Naive thymus-derived CD8-positive, alpha-beta T cell (primary cell): ENCODE measurements at regions of chr7 and their contacts with region 1.

Region 1: GRCh38 chr7:139095194-139095659 is 14.3 kb downstream of the ZC3HAV1 start:
- DNase-seq: peak; percentile 54 to 95 (median 85)
- ATAC-seq: peak; percentile 85 to 94
- H3K4me3 Mint-ChIP-seq: peak overlapping the region; percentile 80 to 98 (median 88)
- H3K27ac Mint-ChIP-seq: peak overlapping the region; percentile 66 to 99 (median 96)
- H3K4me1 Mint-ChIP-seq: peaks cover 47 to 93% (median 87%) of the 10 kb centered on the region in 4 donors
- H3K27me3 Mint-ChIP-seq: no peaks in the 10 kb centered on the region

Region 2: GRCh38 chr7:138797841-138798271 is 297.4 kb before region 1 on chr7 and contains the starts of genes ATP6V0A4 and TMEM213:
- POLR2A ChIA-PET with region 1: no interaction called
- DNase-seq: no peak
- ATAC-seq: peak; percentile 49 to 71
- H3K4me3 Mint-ChIP-seq: peak within 1 kb of the TSS in 2 of 10 donors; percentile 25 to 41
- H3K27ac Mint-ChIP-seq: peak within 1 kb of the TSS in 7 of 10 donors; percentile 9 to 81 (median 44)
- H3K4me1 Mint-ChIP-seq: peaks cover 7 to 13% (median 10%) of the 10 kb centered on the region in 4 donors
- H3K27me3 Mint-ChIP-seq: peaks cover 0 to 3% (median 0%) of the 10 kb centered on the region in 5 donors
- polyA plus RNA-seq, gene ATP6V0A4: not detected
- polyA plus RNA-seq, gene TMEM213: not detected

Region 3: GRCh38 chr7:138954545-138955475 is 140.4 kb before region 1 on chr7:
- POLR2A ChIA-PET with region 1: no interaction called
- DNase-seq: no peak
- ATAC-seq: no peak
- H3K4me3 Mint-ChIP-seq: no peak overlapping the region
- H3K27ac Mint-ChIP-seq: no peak overlapping the region
- H3K4me1 Mint-ChIP-seq: no peaks in the 10 kb centered on the region
- H3K27me3 Mint-ChIP-seq: peaks cover 0 to 11% (median 0%) of the 10 kb centered on the region in 5 donors

Region 4: GRCh38 chr7:139047970-139048369 is 47.3 kb before region 1 on chr7:
- POLR2A ChIA-PET with region 1: no interaction called
- DNase-seq: no peak
- ATAC-seq: no peak
- H3K4me3 Mint-ChIP-seq: no peak overlapping the region
- H3K27ac Mint-ChIP-seq: peak overlapping the region in 7 of 10 donors; percentile 31 to 85 (median 68)
- H3K4me1 Mint-ChIP-seq: peaks cover 19 to 52% (median 50%) of the 10 kb centered on the region in 4 donors
- H3K27me3 Mint-ChIP-seq: no peaks in the 10 kb centered on the region

Region 5: DNA sequence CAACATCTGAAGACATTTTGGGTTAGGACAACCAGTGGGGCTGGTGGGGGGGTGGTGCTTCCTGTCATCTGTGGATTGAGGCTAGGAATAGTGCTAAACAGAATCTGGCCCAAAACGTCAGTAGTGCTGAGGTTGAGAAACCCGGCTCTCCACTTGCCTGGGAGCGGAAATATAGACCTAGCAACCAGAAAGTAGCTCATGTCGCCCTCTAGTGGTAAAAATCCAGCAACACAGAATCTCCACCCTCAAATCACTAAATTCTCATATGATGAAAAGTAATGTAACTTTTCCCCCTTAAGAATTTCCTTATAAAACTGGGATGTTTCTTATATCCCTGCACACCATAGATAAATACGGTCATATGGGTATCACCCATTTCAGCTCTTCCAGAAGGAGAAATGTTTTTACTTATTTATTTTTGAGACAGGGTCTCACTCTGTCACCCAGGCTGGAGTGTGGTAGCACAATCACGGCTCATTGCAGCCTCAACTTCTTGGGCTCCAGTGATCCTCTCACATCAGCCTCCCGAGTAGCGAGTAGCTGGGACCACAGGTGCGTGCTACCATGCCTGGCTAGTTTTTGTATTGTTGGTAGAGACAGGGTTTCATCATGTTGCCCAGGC is 20.1 kb before region 1 on chr7:
- POLR2A ChIA-PET with region 1: interaction called, 121 read pairs
- DNase-seq: peak; percentile 27 to 85 (median 71)
- ATAC-seq: peak; percentile 71 to 80
- H3K4me3 Mint-ChIP-seq: peak overlapping the region; percentile 16 to 83 (median 55)
- H3K27ac Mint-ChIP-seq: peak overlapping the region; percentile 29 to 96 (median 90)
- H3K4me1 Mint-ChIP-seq: peaks cover 20 to 79% (median 70%) of the 10 kb centered on the region in 4 donors
- H3K27me3 Mint-ChIP-seq: no peaks in the 10 kb centered on the region

Region 6: DNA sequence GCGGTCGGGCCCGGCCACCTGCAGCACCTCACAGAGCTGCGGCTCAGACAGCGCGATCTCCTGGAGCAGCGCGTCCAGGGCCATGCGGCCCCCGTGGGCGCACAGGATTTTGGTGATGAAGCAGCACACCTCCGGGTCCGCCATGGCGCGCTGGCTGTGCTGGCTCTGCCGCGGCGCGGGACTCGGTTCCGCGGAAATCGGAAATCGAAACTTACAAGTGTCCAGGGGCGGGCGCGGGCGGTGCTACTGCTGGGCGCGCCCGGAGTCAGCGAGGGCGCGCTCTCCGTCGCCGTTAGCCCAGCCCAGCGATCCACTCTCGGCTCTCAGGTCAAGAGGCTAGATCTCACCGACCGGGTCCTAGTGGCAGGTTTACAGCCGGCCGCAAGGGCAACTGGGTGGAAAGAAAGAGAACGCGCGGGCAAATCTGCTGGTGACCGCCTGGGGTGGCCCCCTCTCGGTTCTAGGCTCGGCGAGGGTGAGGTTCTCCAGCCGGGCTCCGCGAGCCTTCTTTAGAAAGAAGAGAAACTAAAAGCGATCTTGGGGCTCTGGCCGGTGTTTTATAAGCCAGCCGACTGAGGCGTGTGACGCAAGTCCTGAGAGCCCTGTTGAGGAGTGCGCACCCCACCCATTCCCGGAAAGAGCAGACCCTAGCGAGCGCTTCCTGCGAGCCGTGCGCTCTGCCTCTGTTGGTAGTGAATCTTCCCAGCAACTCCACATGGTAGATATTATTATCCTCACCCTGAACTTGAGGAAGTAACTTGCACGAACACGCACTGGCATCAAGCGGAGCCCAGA is 14.2 kb after region 1 on chr7 and contains the start of gene ZC3HAV1:
- POLR2A ChIA-PET with region 1: interaction called, 157 read pairs
- DNase-seq: peak; percentile 74 to 96 (median 90)
- ATAC-seq: peak; percentile 85 to 92
- H3K4me3 Mint-ChIP-seq: peak within 1 kb of the TSS; percentile 95 to 100 (median 98)
- H3K27ac Mint-ChIP-seq: peak within 1 kb of the TSS; percentile 95 to 99 (median 99)
- H3K4me1 Mint-ChIP-seq: peaks cover 18 to 50% (median 45%) of the 10 kb centered on the region in 4 donors
- H3K27me3 Mint-ChIP-seq: no peaks in the 10 kb centered on the region
- polyA plus RNA-seq, gene ZC3HAV1: 144 to 188 (median 162) TPM

Region 7: DNA sequence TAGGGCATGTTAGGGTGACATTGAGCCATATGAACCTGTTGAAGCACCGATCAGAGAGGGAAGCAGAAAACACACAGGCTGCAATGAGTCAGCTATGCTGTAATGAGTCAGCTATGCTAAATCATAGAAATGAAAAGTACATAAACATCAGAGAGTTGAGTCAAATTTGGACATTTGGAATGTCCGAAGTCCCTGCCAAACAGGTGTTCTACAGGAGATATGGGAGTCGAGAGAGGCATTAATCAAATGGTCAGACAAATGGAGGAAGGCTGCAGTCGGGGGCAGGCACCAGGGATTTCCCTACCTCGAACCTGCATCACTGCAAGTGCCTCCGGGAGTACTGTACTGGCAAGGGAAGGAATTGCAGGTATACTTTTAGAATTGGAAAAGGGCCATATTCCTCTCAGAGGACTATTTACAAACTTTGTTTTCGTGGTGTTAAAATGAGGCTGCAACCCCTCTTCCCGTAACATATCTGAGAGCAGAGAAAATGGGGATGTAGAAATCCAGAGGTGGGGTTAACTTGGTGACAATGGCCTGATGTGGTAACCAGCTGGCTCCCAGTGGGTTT is 23.1 kb after region 1 on chr7:
- POLR2A ChIA-PET with region 1: interaction called, 17 read pairs
- DNase-seq: no peak
- ATAC-seq: no peak
- H3K4me3 Mint-ChIP-seq: peak overlapping the region in 6 of 10 donors; percentile 33 to 79 (median 72)
- H3K27ac Mint-ChIP-seq: peak overlapping the region in 9 of 10 donors; percentile 55 to 96 (median 92)
- H3K4me1 Mint-ChIP-seq: peaks cover 17 to 49% (median 41%) of the 10 kb centered on the region in 4 donors
- H3K27me3 Mint-ChIP-seq: no peaks in the 10 kb centered on the region

Region 8: GRCh38 chr7:139133335-139134139 is 38.3 kb after region 1 on chr7:
- POLR2A ChIA-PET with region 1: interaction called, 22 read pairs
- DNase-seq: peak; percentile 69 to 92 (median 87)
- ATAC-seq: peak; percentile 98 to 99
- H3K4me3 Mint-ChIP-seq: peak overlapping the region; percentile 86 to 95 (median 92)
- H3K27ac Mint-ChIP-seq: peak overlapping the region; percentile 83 to 95 (median 93)
- H3K4me1 Mint-ChIP-seq: peaks cover 6 to 17% (median 15%) of the 10 kb centered on the region in 4 donors
- H3K27me3 Mint-ChIP-seq: no peaks in the 10 kb centered on the region